Right ventricle myocardium superior (tissue), 1 donor: ENCODE measurements at regions of chr14 and their contacts with region 1.

Region 1: GRCh38 chr14:29548948-29549370 is 378.7 kb downstream of the PRKD1 start:
- DNase-seq: no peak
- ATAC-seq: peak; percentile 77

Region 2: DNA sequence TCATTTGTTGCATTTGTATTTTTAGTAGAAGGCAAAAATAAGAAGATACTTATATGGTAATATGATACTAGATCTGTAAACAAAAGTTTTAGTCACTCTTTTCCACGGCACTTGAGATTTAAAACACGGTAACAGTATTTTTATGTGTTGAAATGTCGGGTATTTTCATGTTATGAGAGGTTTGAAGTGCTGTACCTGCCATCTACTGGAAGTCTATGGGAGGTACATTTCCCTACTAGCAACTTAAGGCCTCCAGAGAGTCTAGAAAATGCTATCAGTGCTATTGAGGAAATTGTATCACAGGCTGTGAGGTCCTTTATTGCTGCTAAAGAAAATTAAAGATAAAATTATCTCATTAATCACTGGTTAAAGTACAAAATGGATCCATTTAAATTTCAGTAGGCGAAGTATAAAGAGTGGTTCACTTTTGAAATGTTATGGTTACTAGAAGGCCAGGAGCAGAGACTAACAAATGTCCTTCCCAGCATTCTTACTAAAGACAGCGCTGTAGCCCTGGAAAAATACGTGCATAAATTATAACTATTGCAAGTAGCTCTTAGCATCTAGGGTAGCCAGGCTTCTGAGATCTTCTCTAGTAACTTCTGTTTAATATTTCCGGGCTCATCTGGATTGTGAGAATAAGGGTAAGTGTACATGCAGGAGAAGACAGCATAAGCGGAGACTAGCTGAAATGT is 456.3 kb after region 1 on chr14:
- intact Hi-C with region 1: loop called (anchors 2 kb)
- DNase-seq: no peak
- ATAC-seq: peak; percentile 79